Activated CD4-positive, alpha-beta memory T cell treated with anti-CD3 and anti-CD28 coated beads, Interleukin-2, amount 10 ng/mL, durations not matched to agents 7 days and 5 days (primary cell): ENCODE measurements at regions of chr12 and their contacts with region 1.

Region 1: GRCh38 chr12:14365294-14366208 is at the start of gene ATF7IP:
- DNase-seq: peak; percentile 96
- H3K4me3 Mint-ChIP-seq: peak within 1 kb of the TSS; percentile 79
- H3K27ac Mint-ChIP-seq: peak within 1 kb of the TSS; percentile 94
- H3K4me1 Mint-ChIP-seq: peaks cover 31% of the 10 kb centered on the region
- H3K27me3 Mint-ChIP-seq: no peaks in the 10 kb centered on the region
- total RNA-seq, gene ATF7IP: 129 to 134 TPM

Region 2: GRCh38 chr12:14257734-14258574 is 107.6 kb before region 1 on chr12:
- CTCF ChIA-PET with region 1: interaction called, 34 read pairs
- POLR2A ChIA-PET with region 1: interaction called, 60 read pairs
- DNase-seq: peak; percentile 95
- H3K4me3 Mint-ChIP-seq: peak overlapping the region; percentile 55
- H3K27ac Mint-ChIP-seq: peak overlapping the region; percentile 100
- H3K4me1 Mint-ChIP-seq: peaks cover 51% of the 10 kb centered on the region
- H3K27me3 Mint-ChIP-seq: no peaks in the 10 kb centered on the region

Region 3: GRCh38 chr12:14327711-14328381 is 37.7 kb before region 1 on chr12:
- CTCF ChIA-PET with region 1: no interaction called
- POLR2A ChIA-PET with region 1: no interaction called
- DNase-seq: no peak
- H3K4me3 Mint-ChIP-seq: no peak overlapping the region
- H3K27ac Mint-ChIP-seq: no peak overlapping the region
- H3K4me1 Mint-ChIP-seq: no peaks in the 10 kb centered on the region
- H3K27me3 Mint-ChIP-seq: no peaks in the 10 kb centered on the region

Region 4: GRCh38 chr12:14394317-14395073 is 28.9 kb after region 1 on chr12:
- CTCF ChIA-PET with region 1: interaction called, 38 read pairs
- POLR2A ChIA-PET with region 1: interaction called, 247 read pairs
- DNase-seq: peak; percentile 55
- H3K4me3 Mint-ChIP-seq: peak overlapping the region; percentile 75
- H3K27ac Mint-ChIP-seq: peak overlapping the region; percentile 97
- H3K4me1 Mint-ChIP-seq: peaks cover 85% of the 10 kb centered on the region
- H3K27me3 Mint-ChIP-seq: no peaks in the 10 kb centered on the region

Region 5: GRCh38 chr12:14410841-14411569 is 45.5 kb after region 1 on chr12:
- CTCF ChIA-PET with region 1: interaction called, 8 read pairs
- POLR2A ChIA-PET with region 1: interaction called, 36 read pairs
- DNase-seq: peak; percentile 56
- H3K4me3 Mint-ChIP-seq: no peak overlapping the region
- H3K27ac Mint-ChIP-seq: peak overlapping the region; percentile 2
- H3K4me1 Mint-ChIP-seq: peaks cover 61% of the 10 kb centered on the region
- H3K27me3 Mint-ChIP-seq: no peaks in the 10 kb centered on the region

Region 6: DNA sequence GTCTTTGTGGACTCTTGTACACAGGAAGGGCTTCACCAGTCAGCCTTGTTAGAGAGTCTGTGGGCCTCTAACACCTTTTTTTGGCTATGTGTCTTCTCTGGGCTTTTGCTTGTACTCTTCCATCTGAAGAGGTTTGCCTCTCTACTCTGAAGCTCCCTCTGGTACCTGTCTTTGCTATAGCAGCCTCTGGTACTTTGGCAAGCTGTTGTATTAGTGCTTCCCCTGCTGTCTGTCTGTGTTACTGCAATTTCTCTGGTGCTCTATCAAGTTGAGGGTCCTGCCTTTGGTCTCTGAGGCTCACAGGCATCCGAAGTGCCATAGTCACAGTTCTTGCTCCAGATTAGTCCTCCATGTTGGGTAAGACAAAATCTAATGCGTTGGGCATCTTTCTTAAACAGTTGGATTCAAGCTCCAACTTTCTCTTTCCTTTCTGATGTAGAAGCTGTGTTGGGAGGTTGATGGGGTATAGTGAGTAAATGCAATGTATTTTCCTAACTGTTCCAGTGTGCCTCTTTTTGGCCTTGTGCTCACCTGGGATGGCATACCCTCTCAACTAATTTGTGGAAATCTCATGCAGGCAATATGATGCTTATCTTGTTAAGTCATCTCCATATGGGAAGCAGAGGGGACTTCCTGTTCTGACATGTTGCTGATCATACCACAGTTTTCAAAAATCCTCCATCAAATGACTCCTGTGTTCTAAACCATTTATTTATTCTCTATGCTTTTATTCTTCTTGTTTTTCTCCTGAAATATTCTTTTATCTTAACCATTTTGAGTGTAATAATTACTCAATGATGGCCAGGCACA is 88.8 kb after region 1 on chr12:
- CTCF ChIA-PET with region 1: interaction called, 38 read pairs
- POLR2A ChIA-PET with region 1: interaction called, 15 read pairs
- DNase-seq: peak; percentile 44
- H3K4me3 Mint-ChIP-seq: peak overlapping the region; percentile 27
- H3K27ac Mint-ChIP-seq: peak overlapping the region; percentile 67
- H3K4me1 Mint-ChIP-seq: peaks cover 41% of the 10 kb centered on the region
- H3K27me3 Mint-ChIP-seq: no peaks in the 10 kb centered on the region

Region 7: GRCh38 chr12:14482886-14483285 is 117.3 kb after region 1 on chr12:
- CTCF ChIA-PET with region 1: no interaction called
- POLR2A ChIA-PET with region 1: no interaction called
- DNase-seq: no peak
- H3K4me3 Mint-ChIP-seq: no peak overlapping the region
- H3K27ac Mint-ChIP-seq: peak overlapping the region; percentile 2
- H3K4me1 Mint-ChIP-seq: peaks cover 4% of the 10 kb centered on the region
- H3K27me3 Mint-ChIP-seq: no peaks in the 10 kb centered on the region